Activated naive CD4-positive, alpha-beta T cell treated with anti-CD3 and anti-CD28 coated beads for 36 hours (primary cell): ENCODE measurements at regions of chr12 and their contacts with region 1.

Region 1: DNA sequence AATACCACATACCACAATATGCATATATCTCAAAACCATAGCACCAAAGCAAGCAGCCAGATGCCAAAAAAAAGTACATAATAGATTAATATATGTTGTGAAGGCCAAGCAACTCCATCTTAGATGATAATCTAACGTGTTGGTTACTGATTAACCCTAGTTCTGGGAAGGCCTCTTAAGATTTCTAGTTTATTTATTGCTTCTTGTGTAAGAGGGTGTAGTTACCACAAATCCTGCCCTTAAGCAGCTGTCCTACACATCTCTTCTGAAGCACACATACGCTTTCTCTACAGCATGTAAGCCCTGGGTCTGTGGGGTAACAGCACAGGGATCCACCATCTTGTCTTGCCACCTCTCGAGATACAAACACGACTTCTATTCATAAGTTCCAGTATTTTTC is 236.8 kb upstream of the AVPR1A start:
- DNase-seq: no peak
- H3K4me3 Mint-ChIP-seq: no peak overlapping the region
- H3K27ac Mint-ChIP-seq: no peak overlapping the region
- H3K4me1 Mint-ChIP-seq: no peaks in the 10 kb centered on the region
- H3K27me3 Mint-ChIP-seq: peaks cover 2% of the 10 kb centered on the region

Region 2: GRCh38 chr12:63228853-63229252 is 158.9 kb before region 1 on chr12:
- CTCF ChIA-PET with region 1: interaction called, 10 read pairs
- intact Hi-C with region 1: no loop called
- DNase-seq: no peak
- H3K4me3 Mint-ChIP-seq: no peak overlapping the region
- H3K27ac Mint-ChIP-seq: no peak overlapping the region
- H3K4me1 Mint-ChIP-seq: no peaks in the 10 kb centered on the region
- H3K27me3 Mint-ChIP-seq: no peaks in the 10 kb centered on the region

Region 3: DNA sequence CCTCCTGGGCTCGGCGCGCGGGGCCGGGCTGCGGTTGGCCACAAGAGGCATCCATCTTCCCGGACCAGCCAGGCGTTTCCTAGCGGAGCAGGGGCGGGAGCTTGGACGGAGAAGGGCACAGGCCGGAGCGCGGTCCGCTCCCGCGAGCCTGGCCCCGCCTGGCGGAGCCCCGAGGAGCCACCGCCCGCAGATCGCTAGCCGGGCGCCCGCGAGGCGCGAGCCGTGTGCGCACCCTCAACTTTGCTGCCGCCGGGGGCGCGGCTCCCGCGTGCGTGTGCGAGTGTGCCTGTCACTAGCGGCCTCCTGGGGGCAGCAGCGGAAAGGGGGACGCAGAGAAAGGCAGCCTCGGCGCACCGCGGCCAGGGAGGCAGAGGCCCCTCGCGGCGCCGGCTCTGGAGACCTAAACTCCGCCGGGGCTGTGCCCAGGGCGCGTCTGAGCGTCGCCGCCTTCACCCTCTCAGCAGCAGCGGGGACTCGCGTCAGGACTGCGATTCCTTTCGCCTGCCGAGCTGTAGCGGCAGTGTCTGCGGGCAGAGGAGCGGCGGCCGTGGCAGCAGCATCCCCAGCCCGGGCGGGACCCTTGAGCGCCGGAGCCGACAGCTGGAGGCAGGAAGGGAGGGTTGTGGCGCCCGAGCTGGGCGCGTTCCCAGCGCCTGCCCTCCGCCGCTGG is 456.1 kb after region 1 on chr12:
- CTCF ChIA-PET with region 1: no interaction called
- intact Hi-C with region 1: no loop called
- DNase-seq: peak; percentile 84
- H3K4me3 Mint-ChIP-seq: peak overlapping the region; percentile 62
- H3K27ac Mint-ChIP-seq: no peak overlapping the region
- H3K4me1 Mint-ChIP-seq: peaks cover 6% of the 10 kb centered on the region
- H3K27me3 Mint-ChIP-seq: peaks cover 31% of the 10 kb centered on the region